Adrenal gland (tissue), 19 donors: ENCODE measurements at regions of chr22 and their contacts with region 1.

Region 1: GRCh38 chr22:30628491-30628890 is 7.1 kb upstream of the SLC35E4 start:
- DNase-seq: no peak
- H3K4me3 ChIP-seq: no peak overlapping the region
- H3K27ac ChIP-seq: no peak overlapping the region
- H3K4me1 ChIP-seq: no peaks in the 10 kb centered on the region
- H3K27me3 ChIP-seq: no peaks in the 10 kb centered on the region
- CTCF ChIP-seq: no peak
- POLR2A ChIP-seq: no peak

Region 2: DNA sequence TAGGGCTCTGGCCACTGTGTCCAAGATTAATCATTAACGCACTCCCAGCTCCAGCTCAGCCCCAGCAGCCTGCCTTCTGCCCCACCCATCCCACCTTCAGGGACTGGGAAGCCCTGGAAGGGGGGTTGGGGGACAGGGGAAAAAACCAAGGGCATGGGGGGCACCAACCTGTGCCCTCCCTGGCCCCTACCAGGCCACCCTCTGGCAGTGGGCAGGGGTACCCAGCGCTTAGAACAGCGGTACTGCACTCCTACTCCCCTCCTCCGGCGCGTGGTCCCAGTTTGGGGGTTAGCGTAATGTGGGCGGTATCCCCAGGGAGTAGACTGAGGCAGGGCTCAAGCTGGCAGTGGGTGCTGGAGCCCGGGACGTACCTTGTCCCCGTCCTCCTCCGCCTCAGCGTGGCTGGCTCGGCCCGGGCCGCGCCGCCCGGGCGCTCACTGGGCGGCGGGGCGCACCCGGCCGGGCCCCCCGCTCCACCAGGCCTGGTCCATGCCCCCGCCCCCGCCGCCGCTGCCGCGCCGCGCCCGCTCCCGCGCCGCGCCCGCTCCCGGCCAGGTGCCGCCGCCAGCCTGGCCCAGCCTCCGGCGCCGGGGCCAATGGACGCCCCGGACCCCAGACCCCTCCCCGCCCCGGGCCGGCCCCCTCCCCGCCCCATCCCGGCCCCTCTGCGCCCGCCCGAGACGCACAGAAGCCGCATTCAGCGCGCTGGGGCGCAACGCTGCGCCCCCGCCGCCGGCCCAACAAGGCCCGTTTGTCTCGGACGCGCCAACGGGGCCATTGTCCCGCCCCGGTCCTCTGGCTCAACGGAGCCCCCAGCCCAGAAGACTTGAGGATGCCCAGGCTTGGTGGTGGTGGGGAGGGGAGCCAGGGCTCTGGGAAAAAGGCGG is 54.2 kb before region 1 on chr22 and contains the start of gene GAL3ST1:
- intact Hi-C with region 1: no loop called
- DNase-seq: no peak
- H3K4me3 ChIP-seq: no peak within 1 kb of the TSS
- H3K27ac ChIP-seq: peak within 1 kb of the TSS in 1 of 5 donors; percentile 40
- H3K4me1 ChIP-seq: peaks cover 0 to 4% of the 10 kb centered on the region in 2 donors
- H3K27me3 ChIP-seq: no peaks in the 10 kb centered on the region
- CTCF ChIP-seq: no peak
- POLR2A ChIP-seq: no peak
- total RNA-seq, gene GAL3ST1: 0.31 to 0.33 TPM in 2 of 9 donors, not detected in the others

Region 3: GRCh38 chr22:30902496-30903357 is 274.2 kb after region 1 on chr22:
- intact Hi-C with region 1: loop called in 1 of 2 experiments (anchors 10 kb)
- DNase-seq: no peak
- H3K4me3 ChIP-seq: no peak overlapping the region
- H3K27ac ChIP-seq: no peak overlapping the region
- H3K4me1 ChIP-seq: no peaks in the 10 kb centered on the region
- H3K27me3 ChIP-seq: no peaks in the 10 kb centered on the region
- CTCF ChIP-seq: no peak
- POLR2A ChIP-seq: no peak